ENCODE measurements at regions of chr2 and their contacts with region 1.

Region 1: DNA sequence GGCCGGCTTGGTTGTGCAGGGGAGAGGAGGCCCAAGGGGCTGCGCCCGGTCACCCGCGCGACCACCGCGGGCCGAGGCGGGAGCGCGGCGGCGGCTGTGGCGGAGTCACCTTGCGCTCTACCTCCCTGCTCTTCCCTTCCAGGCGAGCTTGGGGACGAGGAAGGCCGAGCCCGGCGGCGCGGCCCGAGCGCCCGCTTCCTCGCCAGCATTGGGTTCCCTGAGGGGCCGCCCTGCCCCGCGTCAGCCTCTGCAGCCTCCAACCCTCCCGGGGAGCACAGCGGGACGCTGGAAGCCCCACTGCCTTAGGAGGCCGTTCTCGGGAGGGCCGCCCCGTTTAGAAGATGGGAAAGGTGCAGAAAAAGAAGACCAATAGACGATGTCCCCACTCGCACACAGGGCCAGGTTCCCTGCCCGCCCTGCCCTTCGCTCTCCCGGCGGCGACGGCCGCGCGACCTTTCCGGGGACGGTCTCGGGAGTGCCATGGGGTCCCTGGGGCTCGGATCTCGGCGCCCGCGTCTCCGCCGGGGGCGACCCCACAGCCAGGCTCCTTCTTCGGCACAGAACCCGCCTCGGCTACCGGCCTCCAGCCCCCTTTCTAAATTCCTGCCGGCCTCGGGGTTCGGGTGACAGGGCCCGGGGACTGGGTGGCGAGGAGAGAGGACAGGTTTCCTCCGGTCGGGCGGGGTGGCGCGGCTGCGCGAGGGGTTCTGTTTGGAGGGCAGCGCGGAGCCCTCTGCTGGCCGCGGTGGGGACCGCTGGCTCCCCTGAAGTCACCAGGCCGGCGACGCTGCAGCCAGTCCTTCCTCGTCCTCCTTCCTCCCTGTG is 85.5 kb downstream of the HS6ST1 start:
- DNase-seq: peak; percentile 93 to 96
- ATAC-seq: peak; percentile 96
- H3K4me3 ChIP-seq: peak overlapping the region; percentile 4 to 73
- H3K27ac ChIP-seq: no peak overlapping the region
- H3K4me1 ChIP-seq: no peaks in the 10 kb centered on the region
- H3K27me3 ChIP-seq: no peaks in the 10 kb centered on the region

Region 2: GRCh38 chr2:128069769-128070168 is 163.4 kb before region 1 on chr2:
- intact Hi-C with region 1: no loop called
- DNase-seq: no peak
- ATAC-seq: no peak
- H3K4me3 ChIP-seq: no peak overlapping the region
- H3K27ac ChIP-seq: no peak overlapping the region
- H3K4me1 ChIP-seq: no peaks in the 10 kb centered on the region
- H3K27me3 ChIP-seq: no peaks in the 10 kb centered on the region

Region 3: DNA sequence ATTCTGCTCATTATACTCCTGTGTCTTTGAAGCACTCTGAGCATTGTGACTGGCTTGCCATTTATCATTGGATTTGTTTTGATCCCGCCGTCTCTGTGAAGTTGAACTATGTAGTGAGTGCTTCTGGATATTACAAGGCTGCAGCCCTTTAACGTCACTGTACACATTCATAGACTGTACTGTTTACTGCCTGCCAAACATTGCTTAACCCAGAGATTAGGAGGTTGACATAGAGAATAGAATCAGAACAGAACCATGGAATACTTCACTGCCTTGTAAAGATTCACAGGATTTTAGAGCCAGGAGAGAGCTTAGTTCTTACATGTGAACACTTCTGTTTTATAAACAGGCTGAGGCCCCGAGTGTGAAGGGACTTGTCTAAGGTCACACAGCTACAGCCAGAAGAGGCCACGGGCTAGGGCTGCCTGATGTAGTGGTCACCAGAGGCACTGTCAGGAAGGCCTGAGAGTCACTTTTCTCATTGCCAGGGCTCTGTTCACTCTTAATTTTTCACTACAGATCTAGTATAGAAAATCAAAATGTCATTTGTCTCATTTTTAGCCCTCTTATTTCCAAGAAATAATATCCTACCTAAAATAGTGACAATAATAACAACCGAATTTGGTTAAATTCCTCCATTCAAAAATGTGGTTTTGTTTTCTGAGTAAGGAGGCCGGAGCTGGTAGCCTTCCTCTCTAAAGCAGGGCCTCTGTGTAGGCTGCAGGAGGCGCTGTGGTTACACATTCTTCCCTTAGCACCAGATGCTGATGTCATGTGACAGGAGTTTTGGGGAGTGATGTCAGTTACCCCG is 54.3 kb before region 1 on chr2:
- intact Hi-C with region 1: loop called in 1 of 2 experiments (anchors 5 kb)
- DNase-seq: peak in 1 of 2 donors; percentile 74
- ATAC-seq: peak; percentile 75
- H3K4me3 ChIP-seq: no peak overlapping the region
- H3K27ac ChIP-seq: no peak overlapping the region
- H3K4me1 ChIP-seq: no peaks in the 10 kb centered on the region
- H3K27me3 ChIP-seq: no peaks in the 10 kb centered on the region